PC-9 (cell line): ENCODE measurements at regions of chr7 and their contacts with region 1.

Region 1: DNA sequence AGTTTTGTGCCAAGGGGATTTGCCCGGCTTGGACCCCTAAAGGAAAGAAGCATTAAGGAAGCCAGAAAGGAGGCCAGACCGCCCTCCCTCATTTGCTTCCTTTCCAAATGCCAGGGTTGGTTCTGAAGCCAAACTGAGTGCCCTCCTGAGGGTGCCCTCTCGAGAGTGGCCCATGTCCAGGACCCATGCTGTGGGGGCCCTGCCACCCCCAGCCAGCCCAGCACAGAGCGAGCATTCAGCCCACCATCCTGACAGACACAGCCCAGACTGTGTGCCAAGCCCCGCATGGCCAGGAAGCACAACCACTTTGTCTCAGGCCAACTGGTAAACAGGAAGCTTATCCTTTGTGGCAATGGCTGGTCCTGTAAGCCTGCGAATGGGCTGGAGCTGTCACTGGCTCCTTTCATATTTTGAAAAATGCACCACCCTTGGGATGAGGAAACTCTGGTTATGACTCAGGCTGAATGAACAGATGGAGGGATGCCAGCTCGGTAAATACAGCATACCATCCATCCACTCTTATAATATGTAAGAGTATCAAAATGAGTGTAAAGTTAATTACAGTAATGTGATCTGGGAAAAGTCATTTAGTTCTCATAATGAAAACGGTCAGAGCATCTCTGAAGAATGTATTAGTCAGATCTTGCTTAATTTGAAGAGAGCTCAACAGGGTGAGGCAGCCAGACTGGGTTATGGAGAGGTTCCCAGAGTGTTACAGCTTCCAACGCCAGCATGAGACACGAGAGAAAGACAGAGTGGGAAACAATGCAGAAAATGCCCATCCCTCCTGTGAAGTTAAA is 65.0 kb downstream of the STK17A start:
- DNase-seq: peak; percentile 82 to 100
- H3K4me3 ChIP-seq: peak overlapping the region; percentile 28; the same call in 1 of the 2 replicates
- H3K27ac ChIP-seq: peak overlapping the region; percentile 98
- H3K4me1 ChIP-seq: peaks cover 73% of the 10 kb centered on the region
- H3K27me3 ChIP-seq: no peaks in the 10 kb centered on the region
- CTCF ChIP-seq: no peak

Region 2: GRCh38 chr7:43572516-43573049 is 75.3 kb before region 1 on chr7:
- CTCF ChIA-PET with region 1: interaction called, 9 read pairs
- POLR2A ChIA-PET with region 1: interaction called, 10 read pairs
- intact Hi-C with region 1: no loop called
- DNase-seq: peak; percentile 46 to 98
- H3K4me3 ChIP-seq: no peak overlapping the region
- H3K27ac ChIP-seq: peak overlapping the region; percentile 87
- H3K4me1 ChIP-seq: peaks cover 15% of the 10 kb centered on the region
- H3K27me3 ChIP-seq: no peaks in the 10 kb centered on the region
- CTCF ChIP-seq: no peak

Region 3: DNA sequence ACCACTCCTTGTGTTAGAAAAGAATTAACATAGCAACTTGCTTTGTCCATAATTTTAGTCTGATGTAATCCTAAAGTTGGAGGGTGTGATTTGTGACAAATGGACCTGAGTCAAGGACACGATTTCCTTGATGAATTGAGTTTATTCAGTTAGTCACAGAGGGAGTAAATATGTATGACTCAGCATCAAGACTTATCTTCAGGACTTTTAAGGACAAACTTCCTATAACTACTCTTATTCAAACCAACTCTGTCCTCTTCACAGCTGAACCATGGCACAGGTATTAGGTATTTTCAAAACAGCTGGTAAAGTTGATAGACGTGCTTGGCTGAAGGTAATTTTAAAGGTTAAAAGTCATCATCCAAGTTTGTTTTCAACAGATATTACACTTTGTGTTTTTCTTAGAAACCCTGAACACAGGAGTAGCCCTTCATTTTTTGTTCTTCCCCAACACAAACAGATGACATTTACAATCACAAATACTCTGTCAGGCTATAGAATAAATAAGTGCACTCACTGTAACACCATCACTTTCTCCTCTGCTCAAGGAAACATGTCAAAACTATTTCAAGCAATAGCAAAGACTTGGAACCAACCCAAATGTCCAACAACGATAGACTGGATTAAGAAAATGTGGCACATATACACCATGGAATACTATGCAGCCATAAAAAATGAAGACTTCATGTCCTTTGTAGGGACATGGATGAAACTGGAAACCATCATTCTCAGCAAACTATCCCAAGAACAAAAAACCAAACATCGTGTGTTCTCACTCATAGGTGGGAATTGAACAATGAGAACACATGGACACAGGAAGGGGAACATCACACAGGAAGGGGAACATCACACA is 26.9 kb after region 1 on chr7:
- CTCF ChIA-PET with region 1: no interaction called
- POLR2A ChIA-PET with region 1: interaction called, 3 read pairs
- intact Hi-C with region 1: loop called (anchors 1 kb)
- DNase-seq: peak in 1 of 2 experiments; percentile 100
- H3K4me3 ChIP-seq: no peak overlapping the region
- H3K27ac ChIP-seq: peak overlapping the region; percentile 88
- H3K4me1 ChIP-seq: peaks cover 17% of the 10 kb centered on the region
- H3K27me3 ChIP-seq: no peaks in the 10 kb centered on the region
- CTCF ChIP-seq: no peak